PC-3 (cell line): ENCODE measurements at regions of chr10 and their contacts with region 1.

Region 1: GRCh38 chr10:6108603-6109443 is 20.0 kb downstream of the RBM17 start:
- DNase-seq: peak; percentile 44
- ATAC-seq: peak; percentile 29; the same call in 1 of the 2 replicates
- H3K4me3 ChIP-seq: no peak overlapping the region
- H3K27ac ChIP-seq: no peak overlapping the region
- H3K4me1 ChIP-seq: peaks cover 27% of the 10 kb centered on the region
- H3K27me3 ChIP-seq: no peaks in the 10 kb centered on the region
- CTCF ChIP-seq: peak; percentile 63

Region 2: DNA sequence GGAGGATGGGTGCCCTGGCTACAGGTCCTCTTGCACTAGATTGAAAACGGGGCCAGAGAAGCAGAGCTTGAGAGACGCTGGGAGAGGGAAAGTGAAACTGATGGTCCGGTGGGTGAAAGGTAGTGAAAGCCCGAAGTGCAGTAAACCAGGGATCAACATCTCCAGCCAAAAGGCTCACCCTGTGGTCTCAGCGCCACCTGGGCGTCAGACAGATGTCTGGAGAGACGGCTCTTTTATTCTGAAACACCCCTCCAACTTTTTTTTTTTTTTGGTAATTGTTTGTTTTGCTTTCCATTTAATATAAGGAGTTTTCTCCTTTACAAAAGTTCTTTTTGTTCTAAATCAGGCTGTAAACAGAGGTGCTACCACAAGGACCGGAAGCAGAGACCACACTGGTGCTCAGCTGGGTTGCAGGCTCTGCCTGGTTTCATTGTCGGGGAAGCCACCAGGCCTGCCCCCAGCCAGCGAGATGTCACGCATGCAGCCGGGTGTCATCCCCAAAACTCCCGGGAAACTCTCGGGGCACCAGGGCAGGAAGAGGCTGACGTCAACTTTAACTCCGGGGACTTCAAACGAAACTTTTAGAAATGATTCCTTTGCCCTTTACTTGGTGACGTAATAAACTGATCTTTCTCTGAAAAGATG is 57.9 kb before region 1 on chr10:
- CTCF ChIA-PET with region 1: no interaction called
- POLR2A ChIA-PET with region 1: no interaction called
- intact Hi-C with region 1: no loop called
- DNase-seq: peak; percentile 44
- ATAC-seq: peak; percentile 83
- H3K4me3 ChIP-seq: peak overlapping the region; percentile 66
- H3K27ac ChIP-seq: no peak overlapping the region
- H3K4me1 ChIP-seq: peaks cover 6% of the 10 kb centered on the region; the same call in 1 of the 2 replicates
- H3K27me3 ChIP-seq: peaks cover under 1% of the 10 kb centered on the region; the same call in 1 of the 2 replicates
- CTCF ChIP-seq: peak; percentile 43; the same call in 1 of the 2 replicates

Region 3: GRCh38 chr10:6128591-6129251 is 19.9 kb after region 1 on chr10:
- CTCF ChIA-PET with region 1: no interaction called
- POLR2A ChIA-PET with region 1: no interaction called
- intact Hi-C with region 1: no loop called
- DNase-seq: no peak
- ATAC-seq: no peak
- H3K4me3 ChIP-seq: no peak overlapping the region
- H3K27ac ChIP-seq: no peak overlapping the region
- H3K4me1 ChIP-seq: no peaks in the 10 kb centered on the region
- H3K27me3 ChIP-seq: no peaks in the 10 kb centered on the region
- CTCF ChIP-seq: no peak

Region 4: DNA sequence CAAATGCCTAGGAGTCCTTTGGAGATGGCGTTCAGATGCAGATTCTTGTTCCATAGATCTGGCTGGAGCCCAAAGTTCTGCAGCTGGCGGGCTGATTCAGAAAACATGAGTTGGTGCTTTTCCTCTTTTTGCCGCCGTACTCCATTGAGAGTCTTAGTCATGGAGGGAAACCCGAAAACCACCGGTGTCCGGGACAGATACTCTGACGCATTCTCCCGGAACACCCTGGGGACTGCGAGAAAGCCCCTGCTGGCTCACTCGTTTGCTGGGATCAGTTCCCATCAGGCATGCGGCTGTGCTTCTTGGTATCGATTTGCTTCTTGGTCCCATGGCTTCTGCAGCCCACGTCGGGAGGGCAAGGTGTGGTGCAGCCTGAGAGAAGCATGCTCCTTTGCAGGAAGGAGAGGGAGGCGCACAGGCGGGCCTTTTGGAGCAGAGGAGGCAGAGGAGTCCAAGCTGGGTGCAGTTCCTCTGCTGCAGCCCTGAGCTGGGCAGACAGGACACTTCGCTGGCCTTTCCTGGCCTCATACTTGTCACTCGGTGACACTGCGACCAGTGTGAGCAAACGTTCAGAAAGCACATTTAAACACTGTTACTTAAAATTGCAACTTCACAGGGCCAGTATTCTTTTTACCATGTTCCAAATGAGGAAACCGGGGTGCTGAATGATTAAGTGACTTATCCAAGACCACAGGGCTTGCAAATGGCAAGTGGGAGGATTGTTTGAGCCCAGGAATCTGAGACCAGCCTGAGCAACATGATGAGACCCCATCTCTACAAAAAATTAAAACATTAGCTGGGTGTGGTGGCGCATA is 63.3 kb after region 1 on chr10:
- CTCF ChIA-PET with region 1: no interaction called
- POLR2A ChIA-PET with region 1: no interaction called
- intact Hi-C with region 1: no loop called
- DNase-seq: no peak
- ATAC-seq: no peak
- H3K4me3 ChIP-seq: no peak overlapping the region
- H3K27ac ChIP-seq: no peak overlapping the region
- H3K4me1 ChIP-seq: no peaks in the 10 kb centered on the region
- H3K27me3 ChIP-seq: no peaks in the 10 kb centered on the region
- CTCF ChIP-seq: no peak

Region 5: DNA sequence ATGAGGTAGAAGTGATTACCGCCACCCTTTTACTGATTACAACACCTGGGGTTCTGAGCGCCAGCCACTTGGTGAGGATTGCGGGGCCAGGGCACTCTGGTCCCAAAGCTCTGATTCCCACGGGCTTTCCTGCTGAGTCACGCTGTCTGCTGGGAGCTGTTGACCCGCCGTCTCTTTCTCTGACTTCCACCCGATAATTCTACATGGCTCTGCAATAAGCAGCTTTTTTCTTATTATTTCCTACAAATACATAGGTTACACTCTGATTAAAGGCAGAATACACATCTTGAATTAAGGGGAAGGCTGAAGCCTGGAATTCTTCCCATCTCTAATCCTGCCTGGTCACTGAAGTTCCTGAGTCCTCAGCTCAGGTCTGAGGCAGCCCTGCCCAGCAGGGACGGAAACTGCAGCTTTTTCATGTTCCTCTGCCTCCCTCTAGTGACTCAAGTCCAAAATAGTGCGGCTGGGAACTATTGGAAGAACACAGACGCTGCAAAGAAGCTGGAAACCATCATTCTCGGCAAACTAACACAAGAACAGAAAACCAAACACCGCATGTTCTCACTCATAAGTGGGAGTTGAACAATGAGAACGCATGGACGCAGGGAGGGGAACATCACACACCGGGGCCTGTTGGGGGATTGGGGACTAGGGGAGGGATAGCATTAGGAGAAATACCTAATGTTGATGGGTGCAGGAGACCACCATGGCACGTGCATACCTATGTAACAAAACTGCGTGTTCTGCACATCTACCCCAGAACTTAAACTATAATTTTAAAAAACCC is 292.9 kb after region 1 on chr10:
- CTCF ChIA-PET with region 1: interaction called, 12 read pairs
- POLR2A ChIA-PET with region 1: no interaction called
- intact Hi-C with region 1: loop called (anchors 1 kb)
- DNase-seq: peak; percentile 81
- ATAC-seq: peak; percentile 94
- H3K4me3 ChIP-seq: peak overlapping the region; percentile 68
- H3K27ac ChIP-seq: peak overlapping the region; percentile 61
- H3K4me1 ChIP-seq: peaks cover 5% of the 10 kb centered on the region
- H3K27me3 ChIP-seq: no peaks in the 10 kb centered on the region
- CTCF ChIP-seq: peak; percentile 62